ENCODE measurements at regions of chr1 and their contacts with region 1.

Region 1: DNA sequence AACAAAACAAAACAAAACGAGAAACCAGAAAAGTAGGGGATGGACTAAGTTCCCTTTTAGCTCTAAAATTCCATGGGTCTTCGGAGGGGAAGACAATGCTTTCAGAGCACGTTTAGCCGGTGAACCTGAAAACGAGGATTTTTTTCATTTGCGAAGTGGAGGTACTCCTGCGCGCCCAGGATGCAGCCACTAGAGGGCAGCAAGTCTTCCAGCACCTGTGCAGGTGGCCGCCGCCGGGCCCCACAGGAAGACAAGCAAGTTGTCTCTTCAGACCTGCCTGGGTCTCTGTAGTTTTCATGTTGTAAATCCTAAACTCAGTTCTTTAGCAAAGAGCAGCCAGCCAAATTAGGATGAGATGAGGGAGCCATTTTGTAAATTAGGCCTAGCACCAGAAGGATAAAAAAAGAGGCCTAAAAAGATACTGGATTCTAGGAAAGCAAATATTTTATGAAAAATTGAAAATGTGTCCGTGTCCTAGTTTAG is 17.7 kb upstream of the SNX27 start:
- DNase-seq: no peak
- H3K4me3 ChIP-seq: no peak overlapping the region
- H3K27ac ChIP-seq: no peak overlapping the region
- H3K27me3 ChIP-seq: no peaks in the 10 kb centered on the region
- CTCF ChIP-seq: peak; percentile 93

Region 2: GRCh38 chr1:150961799-150962198 is 632.4 kb before region 1 on chr1:
- CTCF ChIA-PET with region 1: no interaction called
- POLR2A ChIA-PET with region 1: interaction called, 10 read pairs
- DNase-seq: no peak
- H3K4me3 ChIP-seq: no peak overlapping the region
- H3K27ac ChIP-seq: peak overlapping the region; percentile 21
- H3K27me3 ChIP-seq: no peaks in the 10 kb centered on the region
- CTCF ChIP-seq: no peak

Region 3: DNA sequence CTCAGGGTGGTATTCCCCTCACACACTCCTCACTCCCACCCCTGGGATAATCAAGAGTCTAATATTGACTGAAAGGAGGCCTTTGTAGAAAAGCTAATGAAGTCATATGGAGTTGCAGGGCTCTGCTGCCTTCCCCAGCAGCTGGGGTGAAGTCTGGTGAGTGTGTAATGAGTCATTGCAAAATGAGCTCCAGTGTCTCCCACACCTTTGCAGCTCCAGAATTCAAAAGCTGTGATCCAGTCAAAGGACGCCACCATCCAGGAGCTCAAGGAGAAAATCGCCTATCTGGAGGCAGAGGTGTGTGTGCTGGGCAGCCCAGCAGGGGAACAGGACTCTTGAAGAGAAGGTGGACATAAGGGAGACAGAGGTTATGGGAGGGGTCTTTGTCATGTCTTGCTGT is 14.7 kb before region 1 on chr1:
- CTCF ChIA-PET with region 1: interaction called, 21 read pairs
- POLR2A ChIA-PET with region 1: no interaction called
- DNase-seq: peak; percentile 21
- H3K4me3 ChIP-seq: no peak overlapping the region
- H3K27ac ChIP-seq: no peak overlapping the region
- H3K27me3 ChIP-seq: no peaks in the 10 kb centered on the region
- CTCF ChIP-seq: no peak

Region 4: GRCh38 chr1:151606395-151606794 is 12.2 kb after region 1 on chr1:
- CTCF ChIA-PET with region 1: interaction called, 33 read pairs
- POLR2A ChIA-PET with region 1: no interaction called
- DNase-seq: no peak
- H3K4me3 ChIP-seq: no peak overlapping the region
- H3K27ac ChIP-seq: no peak overlapping the region
- H3K27me3 ChIP-seq: no peaks in the 10 kb centered on the region
- CTCF ChIP-seq: no peak

Region 5: DNA sequence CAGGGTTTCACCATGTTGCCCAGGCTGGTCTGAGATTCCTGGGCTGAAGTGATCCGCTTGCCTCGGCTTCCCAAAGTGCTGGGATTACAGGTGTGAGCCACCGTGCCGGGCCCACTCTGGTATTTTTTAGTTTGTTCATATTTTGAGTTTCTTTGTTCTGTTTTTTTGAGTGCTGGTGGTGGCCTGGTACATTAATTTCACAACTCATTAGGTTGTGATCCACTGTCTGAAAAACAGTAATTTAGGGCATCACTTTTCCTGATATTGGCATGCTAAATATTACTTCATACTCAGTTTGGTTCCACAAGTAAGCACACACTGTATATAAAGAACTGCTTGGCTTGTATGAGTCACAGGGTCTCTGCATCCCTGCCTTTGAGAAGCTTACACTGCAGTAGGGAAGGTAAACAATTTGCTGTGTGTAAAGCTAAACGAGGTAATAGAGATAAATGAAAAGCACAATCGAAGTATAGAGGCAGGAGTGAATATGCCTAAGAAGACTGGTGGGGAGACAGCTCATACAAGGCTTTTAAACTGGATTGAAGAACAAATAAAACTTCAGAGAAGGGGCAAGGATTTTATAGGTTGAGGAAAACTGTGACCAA is 25.4 kb after region 1 on chr1:
- CTCF ChIA-PET with region 1: interaction called, 23 read pairs
- POLR2A ChIA-PET with region 1: no interaction called
- DNase-seq: peak; percentile 56
- H3K4me3 ChIP-seq: peak overlapping the region; percentile 20
- H3K27ac ChIP-seq: peak overlapping the region; percentile 53
- H3K27me3 ChIP-seq: no peaks in the 10 kb centered on the region
- CTCF ChIP-seq: no peak

Region 6: DNA sequence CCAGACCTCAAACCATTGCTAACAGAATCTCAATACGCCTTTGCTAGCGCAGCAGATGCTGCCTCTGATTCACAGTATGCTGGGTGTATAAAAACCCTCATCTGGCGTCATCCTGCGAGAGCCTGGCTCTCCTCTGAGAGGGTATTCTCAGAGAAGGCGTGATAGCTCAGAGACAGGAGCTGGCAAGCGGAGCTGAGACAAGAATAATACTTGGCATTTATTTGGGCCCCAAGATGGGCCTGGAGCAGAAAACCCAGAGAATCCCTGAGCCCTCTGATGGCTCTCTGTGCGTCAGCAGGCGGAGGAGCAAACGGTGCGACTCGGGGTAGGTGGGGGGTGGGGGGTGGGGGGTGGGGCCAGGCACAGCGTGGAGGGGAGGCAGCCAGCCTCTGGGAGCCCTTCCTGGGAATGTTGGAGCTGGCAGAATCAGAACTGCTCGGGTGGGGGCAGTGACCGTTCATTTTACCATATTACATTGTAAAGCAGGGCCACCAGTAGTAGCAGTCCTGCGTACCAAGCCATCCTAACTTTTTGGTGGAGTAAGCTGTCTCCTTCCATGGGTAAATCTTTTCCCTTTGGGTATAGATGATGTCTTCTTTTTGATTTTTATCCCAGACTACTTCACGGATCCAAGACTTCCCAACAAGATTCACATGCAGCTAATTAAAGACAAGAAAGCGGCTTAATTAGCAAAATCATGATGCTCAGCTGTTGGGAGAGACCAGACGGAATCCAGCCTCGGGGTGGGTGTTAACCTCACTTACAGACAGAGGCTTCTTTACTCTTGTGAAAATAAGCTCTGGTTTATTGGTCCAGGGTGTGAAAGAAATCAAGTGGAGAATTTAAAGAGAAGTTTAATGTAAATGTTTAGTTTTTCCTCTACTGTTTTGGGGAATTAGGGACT is 134.2 kb after region 1 on chr1:
- CTCF ChIA-PET with region 1: interaction called, 18 read pairs
- POLR2A ChIA-PET with region 1: no interaction called
- DNase-seq: peak; percentile 16
- H3K4me3 ChIP-seq: no peak overlapping the region
- H3K27ac ChIP-seq: no peak overlapping the region
- H3K27me3 ChIP-seq: peaks cover 44% of the 10 kb centered on the region
- CTCF ChIP-seq: no peak